ENCODE measurements at regions of chr5 and their contacts with region 1.

Region 1: DNA sequence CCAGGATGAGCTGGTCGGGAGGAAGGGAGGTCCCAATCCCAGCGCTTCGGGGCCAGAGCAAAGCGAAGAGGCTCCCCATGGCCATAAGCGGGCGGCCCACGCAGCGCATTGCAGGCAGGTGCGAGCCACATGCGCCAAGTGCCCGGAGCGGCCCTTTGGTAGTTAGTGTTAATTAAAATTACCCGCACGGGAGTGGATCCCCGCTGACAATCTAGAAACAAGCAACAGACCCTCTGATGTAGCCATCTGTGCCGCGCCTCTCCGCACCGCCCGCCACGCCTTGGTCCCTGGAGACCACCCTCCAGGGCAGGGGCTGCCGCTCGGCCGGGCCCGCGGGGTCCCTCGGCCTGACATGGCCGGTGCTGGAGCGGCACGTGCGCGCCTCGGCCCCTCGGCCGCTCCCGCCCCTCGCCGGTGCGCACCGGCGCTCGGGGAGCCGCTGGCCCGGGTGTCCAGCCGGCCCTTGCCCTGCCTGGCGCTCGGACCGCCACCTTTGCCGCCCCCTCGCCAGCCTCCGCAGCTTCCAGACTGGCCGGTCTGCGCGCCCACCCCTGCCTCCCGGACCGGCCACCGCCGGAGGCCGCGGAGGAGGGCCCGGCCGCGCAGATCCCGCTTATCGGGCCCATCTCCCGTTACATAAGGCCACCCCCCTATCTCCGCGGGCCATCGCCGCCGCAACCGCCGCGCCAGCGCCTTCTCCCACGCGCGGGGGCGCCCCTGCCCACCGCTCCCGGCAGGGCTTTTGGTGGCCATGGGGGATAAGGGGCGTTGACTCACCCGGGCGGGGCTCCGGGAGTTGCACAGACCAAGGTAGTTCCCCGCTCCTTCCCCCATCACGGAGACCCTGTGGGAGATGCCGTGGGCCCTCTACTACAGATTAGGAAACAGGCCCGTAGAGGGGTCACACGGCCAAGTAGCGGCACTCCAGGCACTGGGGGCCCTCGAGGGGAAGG is 1.9 kb upstream of the IL13 start:
- DNase-seq: no peak
- H3K4me3 ChIP-seq: peak overlapping the region; percentile 42 to 54
- H3K27ac ChIP-seq: no peak overlapping the region
- H3K4me1 ChIP-seq: peaks cover 0 to 13% (median 12%) of the 10 kb centered on the region in 4 donors
- H3K27me3 ChIP-seq: peaks cover 2 to 19% of the 10 kb centered on the region in 2 donors
- CTCF ChIP-seq: peak; percentile 24 to 25

Region 2: DNA sequence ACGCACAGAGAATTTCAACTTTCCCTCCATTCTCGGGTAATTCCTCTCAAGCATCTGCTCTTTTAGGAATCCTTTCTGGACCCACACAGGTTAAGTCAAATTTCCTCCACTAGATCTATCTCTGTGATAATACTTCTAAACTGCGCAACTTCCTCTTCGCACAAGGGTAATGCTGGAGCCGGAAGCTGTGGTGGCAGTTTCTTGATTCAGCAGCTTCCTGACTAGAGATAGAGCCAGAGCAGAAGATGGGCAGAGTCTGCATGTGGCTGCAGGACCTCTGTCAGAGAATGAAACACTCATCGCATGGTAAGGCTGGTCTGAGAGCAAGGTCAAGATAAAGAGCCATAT is 1403.3 kb before region 1 on chr5:
- intact Hi-C with region 1: no loop called
- DNase-seq: peak; percentile 67 to 69
- H3K4me3 ChIP-seq: no peak overlapping the region
- H3K27ac ChIP-seq: no peak overlapping the region
- H3K4me1 ChIP-seq: no peaks in the 10 kb centered on the region
- H3K27me3 ChIP-seq: no peaks in the 10 kb centered on the region
- CTCF ChIP-seq: no peak

Region 3: DNA sequence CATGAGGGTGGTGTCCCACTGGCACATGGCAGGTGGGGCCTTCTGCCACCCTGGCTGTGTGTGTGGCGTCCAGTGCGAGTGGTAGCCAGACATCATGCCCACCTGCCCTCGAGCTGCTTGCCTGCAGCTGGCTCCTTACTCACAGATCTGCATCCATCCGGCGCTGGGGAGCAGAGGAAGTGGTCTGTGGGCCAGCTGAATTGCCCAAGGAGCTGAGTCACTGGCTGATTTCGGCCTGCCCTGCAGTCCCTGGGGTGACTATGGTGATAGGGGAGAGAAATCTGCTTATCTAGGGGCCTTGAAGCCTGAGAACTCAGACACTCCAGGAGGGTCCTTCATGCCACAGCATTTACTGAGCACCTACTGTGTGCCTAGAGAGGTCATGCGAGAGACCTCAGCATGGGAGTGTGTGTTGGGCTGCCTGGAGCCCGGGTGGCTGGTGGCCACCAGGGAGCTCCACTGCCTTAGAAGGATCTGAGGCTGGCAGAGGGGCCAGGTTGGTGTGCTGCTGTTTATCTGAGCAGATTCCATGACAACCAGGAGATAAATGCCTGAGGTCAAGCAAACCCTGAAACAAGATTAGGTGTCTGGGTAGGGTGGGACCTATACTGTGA is 229.5 kb before region 1 on chr5:
- intact Hi-C with region 1: no loop called
- DNase-seq: peak; percentile 87 to 90
- H3K4me3 ChIP-seq: no peak overlapping the region
- H3K27ac ChIP-seq: peak overlapping the region; percentile 55 to 72
- H3K4me1 ChIP-seq: peaks cover 0 to 97% (median 72%) of the 10 kb centered on the region in 4 donors
- H3K27me3 ChIP-seq: no peaks in the 10 kb centered on the region
- CTCF ChIP-seq: peak; percentile 21 to 23

Region 4: DNA sequence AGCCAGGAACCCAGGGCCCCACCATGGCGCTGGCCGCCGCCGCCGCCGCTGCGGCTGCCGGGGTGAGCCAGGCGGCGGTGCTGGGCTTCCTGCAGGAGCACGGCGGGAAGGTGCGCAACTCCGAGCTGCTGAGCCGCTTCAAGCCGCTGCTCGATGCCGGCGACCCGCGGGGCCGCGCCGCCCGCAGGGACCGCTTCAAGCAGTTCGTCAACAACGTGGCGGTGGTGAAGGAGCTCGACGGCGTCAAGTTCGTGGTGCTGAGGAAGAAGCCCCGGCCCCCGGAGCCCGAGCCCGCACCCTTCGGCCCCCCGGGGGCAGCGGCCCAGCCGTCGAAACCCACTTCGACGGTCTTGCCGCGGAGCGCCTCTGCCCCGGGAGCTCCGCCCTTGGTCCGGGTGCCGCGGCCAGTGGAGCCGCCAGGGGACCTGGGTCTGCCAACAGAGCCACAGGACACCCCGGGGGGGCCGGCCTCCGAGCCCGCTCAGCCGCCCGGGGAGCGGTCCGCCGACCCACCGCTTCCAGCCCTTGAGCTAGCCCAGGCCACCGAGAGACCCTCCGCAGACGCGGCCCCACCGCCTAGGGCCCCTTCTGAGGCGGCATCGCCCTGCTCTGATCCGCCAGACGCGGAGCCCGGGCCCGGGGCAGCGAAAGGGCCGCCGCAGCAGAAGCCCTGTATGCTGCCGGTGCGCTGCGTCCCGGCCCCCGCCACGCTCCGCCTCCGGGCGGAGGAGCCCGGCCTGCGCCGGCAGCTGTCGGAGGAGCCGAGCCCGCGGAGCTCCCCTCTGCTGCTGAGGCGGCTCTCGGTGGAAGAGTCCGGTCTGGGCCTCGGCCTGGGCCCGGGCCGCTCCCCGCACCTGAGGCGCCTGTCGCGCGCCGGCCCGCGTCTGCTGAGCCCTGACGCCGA is 157.8 kb after region 1 on chr5:
- intact Hi-C with region 1: loop called (anchors 10 kb)
- DNase-seq: peak in 1 of 2 donors; percentile 68
- H3K4me3 ChIP-seq: peak overlapping the region; percentile 35 to 51
- H3K27ac ChIP-seq: no peak overlapping the region
- H3K4me1 ChIP-seq: peaks cover 0 to 18% (median 16%) of the 10 kb centered on the region in 4 donors
- H3K27me3 ChIP-seq: peaks cover 0 to 42% of the 10 kb centered on the region in 2 donors
- CTCF ChIP-seq: no peak

Measured in tibial artery (tissue), 4 donors.